Gastrocnemius medialis (tissue), 4 donors: ENCODE measurements at regions of chr15 and their contacts with region 1.

Region 1: GRCh38 chr15:65832549-65833364 is 36.5 kb upstream of the RAB11A start:
- DNase-seq: peak; percentile 94 to 97
- ATAC-seq: peak; percentile 98 to 99
- H3K4me3 ChIP-seq: peak overlapping the region; percentile 7 to 41 (median 34)
- H3K27ac ChIP-seq: peak overlapping the region; percentile 86 to 95 (median 91)
- H3K4me1 ChIP-seq: peaks cover 29 to 52% of the 10 kb centered on the region in 2 donors
- H3K27me3 ChIP-seq: no peaks in the 10 kb centered on the region
- CTCF ChIP-seq: peak in 4 of 5 experiments; percentile 10 to 36 (median 28)
- POLR2A ChIP-seq: no peak

Region 2: GRCh38 chr15:65587094-65587493 is 245.7 kb before region 1 on chr15:
- in situ Hi-C with region 1: no loop called
- intact Hi-C with region 1: no loop called
- DNase-seq: no peak
- ATAC-seq: no peak
- H3K4me3 ChIP-seq: no peak overlapping the region
- H3K27ac ChIP-seq: no peak overlapping the region
- H3K4me1 ChIP-seq: no peaks in the 10 kb centered on the region
- H3K27me3 ChIP-seq: no peaks in the 10 kb centered on the region
- CTCF ChIP-seq: no peak
- POLR2A ChIP-seq: no peak

Region 3: GRCh38 chr15:65792130-65792987 is 40.4 kb before region 1 on chr15 and contains the start of gene DENND4A:
- in situ Hi-C with region 1: loop called in 1 of 4 experiments (anchors 5 kb)
- intact Hi-C with region 1: loop called (anchors 2 kb)
- DNase-seq: peak; percentile 94 to 98
- ATAC-seq: peak; percentile 92 to 94
- H3K4me3 ChIP-seq: peak within 1 kb of the TSS; percentile 68 to 100 (median 85)
- H3K27ac ChIP-seq: peak within 1 kb of the TSS; percentile 96 to 100 (median 98)
- H3K4me1 ChIP-seq: peaks cover 18 to 32% of the 10 kb centered on the region in 2 donors
- H3K27me3 ChIP-seq: no peaks in the 10 kb centered on the region
- CTCF ChIP-seq: no peak
- POLR2A ChIP-seq: peak; percentile 72 to 89
- total RNA-seq, gene DENND4A: 24.4 to 46.4 (median 33.1) TPM

Region 4: GRCh38 chr15:65856821-65857455 is 24.2 kb after region 1 on chr15:
- in situ Hi-C with region 1: no loop called
- intact Hi-C with region 1: loop called (anchors 1 kb)
- DNase-seq: peak in 1 of 2 donors; percentile 44
- ATAC-seq: peak in 1 of 2 donors; percentile 16
- H3K4me3 ChIP-seq: no peak overlapping the region
- H3K27ac ChIP-seq: peak overlapping the region in 2 of 4 donors; percentile 28 to 85
- H3K4me1 ChIP-seq: peaks cover 13 to 14% of the 10 kb centered on the region in 2 donors
- H3K27me3 ChIP-seq: no peaks in the 10 kb centered on the region
- CTCF ChIP-seq: peak; percentile 49 to 77 (median 70)
- POLR2A ChIP-seq: no peak

Region 5: GRCh38 chr15:65869127-65869953 is 36.6 kb after region 1 on chr15 and contains the start of gene RAB11A:
- in situ Hi-C with region 1: loop called in 1 of 4 experiments (anchors 5 kb)
- intact Hi-C with region 1: loop called (anchors 1 kb)
- DNase-seq: peak; percentile 94 to 97
- ATAC-seq: peak; percentile 93 to 94
- H3K4me3 ChIP-seq: peak within 1 kb of the TSS; percentile 87 to 98 (median 88)
- H3K27ac ChIP-seq: peak within 1 kb of the TSS; percentile 92 to 100 (median 95)
- H3K4me1 ChIP-seq: peaks cover 17 to 23% of the 10 kb centered on the region in 2 donors
- H3K27me3 ChIP-seq: no peaks in the 10 kb centered on the region
- CTCF ChIP-seq: peak in 4 of 5 experiments; percentile 25 to 55 (median 40)
- POLR2A ChIP-seq: peak; percentile 95 to 98
- total RNA-seq, gene RAB11A: 93.0 to 207 (median 166) TPM

Region 6: DNA sequence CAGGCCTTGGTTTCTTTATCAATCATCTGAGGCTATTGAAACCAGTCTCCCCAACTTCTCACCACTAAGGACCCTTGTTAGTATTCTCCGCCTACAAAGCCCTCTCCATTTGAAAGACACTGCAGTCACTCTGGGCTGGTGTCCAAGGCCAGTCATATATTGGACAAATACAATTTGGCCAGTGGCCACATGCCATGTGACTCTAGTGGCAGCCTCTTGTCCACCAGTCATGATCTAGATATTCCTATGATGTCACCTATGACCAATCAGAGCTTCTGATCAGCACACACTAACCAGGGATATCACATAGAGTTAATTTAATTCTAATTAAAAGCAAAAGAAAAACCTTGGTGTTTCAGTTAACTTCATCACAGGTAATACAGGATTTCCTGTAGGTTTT is 104.7 kb after region 1 on chr15:
- in situ Hi-C with region 1: no loop called
- intact Hi-C with region 1: no loop called
- DNase-seq: no peak
- ATAC-seq: no peak
- H3K4me3 ChIP-seq: no peak overlapping the region
- H3K27ac ChIP-seq: no peak overlapping the region
- H3K4me1 ChIP-seq: peaks cover 8 to 13% of the 10 kb centered on the region in 2 donors
- H3K27me3 ChIP-seq: no peaks in the 10 kb centered on the region
- CTCF ChIP-seq: no peak
- POLR2A ChIP-seq: no peak